GM18951 (cell line): ENCODE measurements at regions of chr17 and their contacts with region 1.

Region 1: DNA sequence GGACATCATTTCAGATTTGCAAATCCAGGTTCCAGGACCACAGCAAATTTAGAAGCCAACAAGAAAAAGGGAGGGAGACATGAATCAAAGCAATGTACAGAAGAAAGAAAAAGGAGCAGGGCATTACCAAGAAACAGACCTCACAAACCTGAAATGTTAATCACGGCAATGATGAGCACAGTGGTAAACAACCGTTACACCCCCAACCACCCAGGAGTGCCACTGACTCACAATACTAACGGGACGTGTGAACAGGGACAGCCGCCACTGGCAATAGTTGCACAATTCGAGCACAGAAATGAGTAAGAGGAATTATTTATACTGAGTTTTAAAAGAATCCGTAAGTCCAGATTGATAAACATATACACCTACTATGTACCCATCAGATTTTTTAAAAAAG is 13.8 kb downstream of the USP22 start:
- POLR2A ChIP-seq: no peak

Region 2: DNA sequence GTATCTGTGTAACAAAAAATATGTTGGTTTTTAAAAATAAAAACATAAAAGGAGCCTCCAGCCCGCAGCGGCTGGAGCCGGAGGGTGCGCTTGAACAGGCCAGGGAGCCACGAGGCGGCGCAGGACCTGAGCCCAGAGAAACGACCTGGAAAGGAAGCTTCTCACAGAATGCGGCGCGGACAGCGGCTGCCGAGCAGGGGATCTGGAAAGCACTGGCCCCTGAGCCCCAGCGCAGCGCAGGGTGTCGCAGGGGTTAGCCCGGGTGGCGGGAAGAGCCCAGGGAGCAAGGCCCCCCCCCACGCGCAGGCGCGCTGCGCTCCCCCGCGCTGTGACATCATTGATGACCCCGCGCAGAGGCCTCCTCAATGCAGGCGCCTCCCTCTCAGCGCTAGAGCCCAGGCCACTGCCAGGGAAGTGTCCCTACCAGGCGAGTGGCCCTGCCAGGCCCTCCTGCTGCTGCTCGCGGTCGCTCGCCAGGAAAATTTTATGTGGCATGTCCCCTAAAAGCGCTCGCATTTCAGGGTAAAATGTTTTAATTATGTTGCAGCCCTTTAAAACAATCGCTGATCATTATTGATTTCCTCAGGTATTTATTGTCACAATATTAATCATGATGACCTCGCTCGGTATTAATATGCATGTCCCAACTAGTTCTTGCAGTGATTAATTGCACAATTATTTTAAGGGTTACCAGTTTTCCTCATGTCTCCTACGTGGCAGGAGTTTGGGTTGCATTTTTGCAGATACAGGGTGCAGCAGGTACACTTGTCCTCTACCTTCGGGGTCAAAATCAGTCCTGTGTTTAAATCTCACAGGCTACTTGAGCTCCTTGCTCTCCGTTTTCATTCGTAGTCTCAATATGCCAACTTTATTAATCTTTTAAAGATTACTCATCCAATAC is 120.4 kb before region 1 on chr17:
- in situ Hi-C with region 1: no loop called
- POLR2A ChIP-seq: peak; percentile 51

Region 3: DNA sequence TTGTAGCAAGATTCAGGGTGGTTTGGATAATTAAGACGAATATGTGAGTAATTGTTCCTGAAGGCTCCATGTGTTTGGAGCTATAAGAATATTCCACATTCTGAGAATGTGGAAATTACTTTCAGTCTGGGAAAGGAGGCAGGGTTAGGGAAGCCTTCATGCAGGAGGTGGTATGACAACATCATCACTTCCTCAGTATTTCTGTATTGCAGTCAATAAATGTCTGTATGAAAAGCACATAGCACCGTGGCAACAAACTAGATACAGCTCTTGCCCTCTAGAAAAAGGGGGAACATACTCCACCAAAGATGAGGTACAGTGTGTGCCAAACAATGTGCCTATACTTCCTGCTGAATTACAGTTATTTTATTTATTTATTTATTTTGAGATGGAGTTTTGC is 71.6 kb after region 1 on chr17:
- in situ Hi-C with region 1: loop called (anchors 5 kb)
- POLR2A ChIP-seq: no peak

Region 4: GRCh38 chr17:21146362-21147015 is 117.5 kb after region 1 on chr17:
- in situ Hi-C with region 1: no loop called
- POLR2A ChIP-seq: no peak